Posterior vena cava (tissue), 2 donors: ENCODE measurements at regions of chr3 and their contacts with region 1.

Region 1: DNA sequence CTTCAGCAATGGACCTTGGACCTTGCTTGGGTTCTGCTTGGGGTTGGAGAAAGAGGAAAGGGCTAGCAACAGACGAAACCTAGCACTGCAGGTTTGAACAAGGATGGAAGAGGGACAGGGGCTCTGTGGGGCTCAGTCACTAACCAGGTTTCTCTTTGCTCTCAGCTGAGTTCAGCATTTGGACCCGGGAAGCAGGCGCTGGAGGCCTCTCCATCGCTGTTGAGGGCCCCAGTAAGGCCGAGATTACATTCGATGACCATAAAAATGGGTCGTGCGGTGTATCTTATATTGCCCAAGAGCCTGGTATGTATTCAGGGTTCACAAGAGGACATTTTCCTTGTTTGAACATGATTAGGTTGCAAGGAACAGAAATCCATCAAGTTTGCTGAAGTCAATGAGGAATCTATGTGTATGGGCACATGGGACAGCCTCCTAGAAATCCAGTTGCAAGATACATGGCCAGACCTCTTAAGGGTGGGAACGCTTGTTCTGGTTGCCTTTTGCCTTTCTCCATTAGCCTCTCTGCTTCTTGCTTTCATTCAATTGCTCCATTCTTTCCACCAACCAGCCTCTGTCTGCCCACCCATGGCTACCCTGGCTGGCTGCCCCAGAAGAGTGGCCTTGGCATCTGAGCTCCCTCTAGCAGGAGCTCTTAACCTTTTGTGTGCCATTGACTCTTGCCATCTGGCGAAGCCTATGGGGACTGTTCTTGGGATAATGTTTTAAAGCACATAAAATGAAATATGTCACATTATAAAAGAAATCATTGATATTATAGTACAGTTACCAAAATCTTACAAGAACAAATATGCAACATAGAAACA is 55.9 kb downstream of the DNASE1L3 start:
- DNase-seq: peak; percentile 47

Region 2: DNA sequence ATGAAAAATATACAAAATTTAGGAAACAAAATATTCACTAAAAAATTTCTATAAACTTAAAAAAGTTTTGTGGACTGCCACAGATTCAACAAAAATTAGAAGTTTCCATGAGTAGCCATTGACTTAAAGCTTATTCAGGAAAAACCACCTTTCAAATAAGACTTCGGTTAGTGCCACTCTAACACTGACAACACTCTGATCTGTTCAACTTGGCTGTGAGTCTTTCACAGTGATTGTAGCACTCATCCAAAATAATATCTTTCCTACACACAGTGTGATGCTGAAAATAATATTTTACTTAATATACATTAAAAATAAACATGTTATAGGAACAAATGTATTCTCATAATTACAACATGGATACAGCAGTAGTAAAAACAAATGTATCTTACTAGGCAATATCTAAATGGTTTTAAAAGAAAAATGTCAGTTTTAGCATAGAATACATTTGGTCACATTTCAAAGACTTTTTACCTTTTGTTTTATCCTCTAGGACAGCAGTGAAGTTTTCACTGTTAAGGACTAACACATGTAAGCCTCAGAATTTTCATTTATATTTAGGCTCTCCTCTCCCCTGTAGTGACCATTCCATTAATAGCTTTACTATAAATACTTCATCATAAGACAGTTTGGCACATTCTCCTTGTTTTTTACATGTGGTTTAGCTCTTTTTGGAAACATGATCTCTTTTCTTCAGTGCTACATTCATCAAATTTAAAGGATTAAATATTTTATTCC is 862.5 kb before region 1 on chr3 and contains the start of gene ASB14:
- intact Hi-C with region 1: no loop called
- DNase-seq: no peak
- total RNA-seq, gene ASB14: not detected

Region 3: DNA sequence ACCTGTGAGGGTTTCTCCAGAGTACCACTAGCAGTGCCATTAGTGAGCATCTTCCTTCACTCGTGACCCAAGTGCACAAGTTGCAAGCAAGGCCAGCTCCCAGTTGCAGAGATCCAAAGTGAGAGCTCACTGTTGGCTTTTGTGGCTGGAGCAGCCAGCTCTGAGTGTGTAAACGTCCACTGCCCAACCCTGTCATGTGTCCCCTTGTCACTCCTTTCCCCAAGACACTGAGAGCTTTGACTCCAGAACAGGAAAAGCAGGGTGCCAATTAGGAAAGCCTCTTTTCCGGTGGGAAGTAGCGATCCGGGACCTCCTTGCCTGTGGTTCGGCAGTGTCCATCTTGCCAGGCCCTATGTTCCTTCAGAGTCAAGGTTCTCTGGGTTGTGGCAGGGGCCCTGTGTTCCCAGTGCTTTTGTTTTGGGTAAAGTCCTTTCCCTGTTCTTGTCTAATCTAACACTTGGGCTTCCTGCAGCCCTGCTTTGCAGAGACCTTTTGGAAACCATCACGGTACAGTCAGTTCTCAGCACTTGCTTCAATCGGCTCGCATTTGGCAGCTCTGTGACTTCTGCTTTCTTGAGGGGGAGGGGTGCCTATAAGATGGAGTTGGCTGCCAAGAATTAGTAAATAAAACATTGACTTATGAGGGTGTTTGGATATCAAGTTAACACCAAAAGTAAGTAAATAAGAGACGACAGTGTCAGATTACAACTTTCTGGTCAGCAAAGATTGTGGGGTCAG is 34.6 kb before region 1 on chr3:
- intact Hi-C with region 1: loop called in 1 of 2 experiments (anchors 5 kb)
- DNase-seq: no peak